CD8-positive, alpha-beta T cell (primary cell): ENCODE measurements at regions of chr4 and their contacts with region 1.

Region 1: GRCh38 chr4:179051206-179051605 is 1609.0 kb upstream of the AGA start:
- DNase-seq: no peak
- ATAC-seq: no peak
- H3K4me3 ChIP-seq: no peak overlapping the region
- H3K4me3 Mint-ChIP-seq: no peak overlapping the region
- H3K27ac ChIP-seq: no peak overlapping the region
- H3K27ac Mint-ChIP-seq: no peak overlapping the region
- H3K4me1 ChIP-seq: no peaks in the 10 kb centered on the region
- H3K4me1 Mint-ChIP-seq: no peaks in the 10 kb centered on the region
- H3K27me3 ChIP-seq: no peaks in the 10 kb centered on the region
- H3K27me3 Mint-ChIP-seq: no peaks in the 10 kb centered on the region
- CTCF ChIP-seq: no peak

Region 2: GRCh38 chr4:178296669-178297068 is 754.5 kb before region 1 on chr4:
- CTCF ChIA-PET with region 1: no interaction called
- POLR2A ChIA-PET with region 1: no interaction called
- intact Hi-C with region 1: loop called in 1 of 2 experiments (anchors 5 kb)
- DNase-seq: no peak
- ATAC-seq: no peak
- H3K4me3 ChIP-seq: no peak overlapping the region
- H3K4me3 Mint-ChIP-seq: no peak overlapping the region
- H3K27ac ChIP-seq: no peak overlapping the region
- H3K27ac Mint-ChIP-seq: no peak overlapping the region
- H3K4me1 ChIP-seq: no peaks in the 10 kb centered on the region
- H3K4me1 Mint-ChIP-seq: no peaks in the 10 kb centered on the region
- H3K27me3 ChIP-seq: no peaks in the 10 kb centered on the region
- H3K27me3 Mint-ChIP-seq: no peaks in the 10 kb centered on the region
- CTCF ChIP-seq: no peak

Region 3: DNA sequence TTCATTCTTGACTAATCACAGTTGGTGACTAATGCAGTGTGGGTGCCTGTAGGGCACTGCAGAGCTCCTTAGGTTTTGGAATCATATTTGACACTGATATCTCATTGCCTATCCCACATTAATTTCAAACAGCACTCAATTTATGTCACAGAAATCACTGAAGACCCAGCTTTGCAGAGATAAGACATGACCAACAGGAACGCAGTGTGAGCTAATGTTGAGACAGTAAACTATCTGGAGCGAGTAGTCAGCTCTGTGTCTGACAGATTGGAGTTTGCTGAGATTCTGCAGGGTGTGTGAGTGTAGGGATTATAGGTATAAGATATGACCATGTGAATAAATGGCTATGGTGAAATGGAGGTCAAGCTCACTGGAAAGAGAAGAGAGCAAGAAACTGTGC is 22.9 kb before region 1 on chr4:
- CTCF ChIA-PET with region 1: no interaction called
- POLR2A ChIA-PET with region 1: no interaction called
- intact Hi-C with region 1: no loop called
- DNase-seq: no peak
- ATAC-seq: no peak
- H3K4me3 ChIP-seq: no peak overlapping the region
- H3K4me3 Mint-ChIP-seq: no peak overlapping the region
- H3K27ac ChIP-seq: no peak overlapping the region
- H3K27ac Mint-ChIP-seq: no peak overlapping the region
- H3K4me1 ChIP-seq: no peaks in the 10 kb centered on the region
- H3K4me1 Mint-ChIP-seq: no peaks in the 10 kb centered on the region
- H3K27me3 ChIP-seq: no peaks in the 10 kb centered on the region
- H3K27me3 Mint-ChIP-seq: no peaks in the 10 kb centered on the region
- CTCF ChIP-seq: no peak